ENCODE measurements at regions of chr3 and their contacts with region 1.

Region 1: DNA sequence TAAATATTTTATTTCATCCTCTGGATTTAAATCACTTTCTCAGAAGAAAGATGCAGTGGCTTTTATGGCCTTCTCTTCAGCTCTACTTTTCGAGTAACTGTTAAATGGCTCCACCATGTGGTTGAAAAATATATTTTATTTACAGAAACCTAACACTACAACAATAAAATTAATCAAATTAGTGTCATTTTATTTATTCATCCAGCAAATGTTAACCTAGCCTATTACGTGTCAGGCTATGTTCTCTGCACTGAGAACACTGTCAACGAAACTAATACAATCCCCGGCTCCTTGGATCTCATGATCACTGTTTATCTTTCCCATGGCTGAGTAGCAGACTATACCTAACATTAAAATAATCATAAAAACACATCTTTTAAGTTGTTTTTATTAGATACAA is 148.0 kb upstream of the OSTN start:
- DNase-seq: no peak
- H3K4me3 ChIP-seq: no peak overlapping the region
- H3K27ac ChIP-seq: no peak overlapping the region
- H3K4me1 ChIP-seq: no peaks in the 10 kb centered on the region
- H3K27me3 ChIP-seq: no peaks in the 10 kb centered on the region
- CTCF ChIP-seq: peak in 2 of 4 experiments; percentile 8 to 26
- EP300 ChIP-seq: no peak
- POLR2A ChIP-seq: no peak

Region 2: DNA sequence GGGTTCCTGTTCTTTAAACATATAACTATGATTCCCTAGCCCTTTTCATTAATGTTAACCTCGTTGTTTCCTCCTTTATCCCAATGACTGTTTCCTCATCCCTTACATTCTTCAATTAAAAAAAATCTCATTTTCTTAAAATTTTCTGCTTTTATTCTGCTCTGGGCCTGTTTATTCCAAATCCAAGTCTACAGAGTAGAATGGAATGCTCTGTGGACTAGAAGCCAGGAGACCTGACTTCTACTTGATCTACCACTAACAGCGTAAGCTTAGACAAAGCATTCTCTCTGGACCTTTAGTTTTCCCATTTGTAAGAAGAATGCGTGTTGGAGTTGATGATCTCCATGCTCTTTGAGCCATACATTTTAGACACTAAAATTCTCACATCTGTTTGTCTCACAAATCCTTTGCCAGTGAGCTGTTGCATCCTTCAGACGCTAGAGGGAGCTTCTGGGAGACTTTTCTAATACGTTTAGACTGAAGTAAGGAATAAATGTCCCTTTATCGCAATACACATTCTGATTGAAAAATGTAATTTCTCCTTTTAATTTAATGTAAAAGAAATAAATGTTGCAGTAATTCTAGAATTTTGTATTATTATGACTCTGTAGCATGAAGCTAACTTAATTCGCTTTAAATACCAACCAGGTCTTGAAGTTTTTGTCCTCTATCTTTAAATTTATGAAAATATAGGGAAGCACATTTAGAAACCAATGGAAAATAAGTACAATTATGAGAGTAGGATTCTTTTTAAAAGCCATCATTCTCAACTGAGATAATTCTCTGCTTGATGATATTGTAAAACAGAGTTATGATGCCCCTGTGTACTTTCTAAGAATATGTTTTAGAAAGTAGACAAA is 166.8 kb before region 1 on chr3:
- intact Hi-C with region 1: loop called (anchors 10 kb)
- DNase-seq: no peak
- H3K4me3 ChIP-seq: no peak overlapping the region
- H3K27ac ChIP-seq: no peak overlapping the region
- H3K4me1 ChIP-seq: no peaks in the 10 kb centered on the region
- H3K27me3 ChIP-seq: no peaks in the 10 kb centered on the region
- CTCF ChIP-seq: peak in 3 of 4 experiments; percentile 33 to 85 (median 50)
- EP300 ChIP-seq: no peak
- POLR2A ChIP-seq: no peak